Dorsolateral prefrontal cortex (tissue), 120 donors: ENCODE measurements at regions of chr1 and their contacts with region 1.

Region 1: GRCh38 chr1:31189696-31190674 is 49.7 kb downstream of the NKAIN1 start:
- DNase-seq: peak in 8 of 10 donors; percentile 20 to 92 (median 58)
- H3K4me3 ChIP-seq: no peak overlapping the region
- H3K27ac ChIP-seq: peak overlapping the region in 28 of 59 donors; percentile 10 to 84 (median 44)
- H3K27me3 ChIP-seq: no peaks in the 10 kb centered on the region
- CTCF ChIP-seq: no peak

Region 2: GRCh38 chr1:31239653-31240241 is 49.8 kb after region 1 on chr1 and contains the start of gene NKAIN1:
- intact Hi-C with region 1: loop called in 1 of 2 experiments (anchors 5 kb)
- DNase-seq: peak in 3 of 10 donors; percentile 24 to 72 (median 58)
- H3K4me3 ChIP-seq: peak within 1 kb of the TSS; percentile 28 to 76 (median 58)
- H3K27ac ChIP-seq: peak within 1 kb of the TSS in 30 of 59 donors; percentile 3 to 74 (median 48)
- H3K27me3 ChIP-seq: peaks cover 0 to 29% (median 0%) of the 10 kb centered on the region in 45 donors
- CTCF ChIP-seq: peak in 2 of 56 donors; percentile 11 to 26
- total RNA-seq, gene NKAIN1: 3.6 to 42.1 (median 11.7) TPM

Region 3: DNA sequence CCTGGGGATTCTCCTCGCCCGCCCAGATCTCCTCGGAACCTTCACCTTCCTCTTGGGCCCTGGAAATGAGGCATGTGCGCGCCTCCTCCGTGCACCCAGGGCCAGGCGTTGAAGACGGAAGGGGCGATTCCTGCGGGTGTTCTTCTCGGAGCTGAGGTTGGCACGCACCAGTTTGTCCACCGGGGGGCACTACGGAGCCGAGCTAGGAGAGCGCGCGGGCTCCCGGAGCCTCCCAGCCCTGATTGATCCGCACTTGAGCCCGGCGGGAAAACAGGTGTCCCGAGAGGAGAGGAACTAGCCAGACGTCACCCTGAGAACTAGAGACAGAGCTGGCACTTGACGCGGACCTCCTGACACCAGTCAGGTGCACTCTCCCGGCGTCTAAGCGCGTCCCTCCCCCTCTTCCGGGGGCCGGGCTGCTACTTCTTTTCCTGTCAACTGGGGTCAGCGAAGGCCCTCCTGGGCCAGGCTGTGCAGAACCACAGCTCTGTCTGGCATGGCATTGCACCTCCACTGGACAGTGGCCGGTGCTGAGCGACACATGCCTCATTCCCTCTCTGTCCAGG is 204.7 kb after region 1 on chr1:
- intact Hi-C with region 1: no loop called
- DNase-seq: peak; percentile 70 to 87 (median 82)
- H3K4me3 ChIP-seq: peak overlapping the region; percentile 18 to 72 (median 50)
- H3K27ac ChIP-seq: peak overlapping the region in 4 of 59 donors; percentile 3 to 67 (median 34)
- H3K27me3 ChIP-seq: no peaks in the 10 kb centered on the region
- CTCF ChIP-seq: peak; percentile 38 to 95 (median 88)

Region 4: DNA sequence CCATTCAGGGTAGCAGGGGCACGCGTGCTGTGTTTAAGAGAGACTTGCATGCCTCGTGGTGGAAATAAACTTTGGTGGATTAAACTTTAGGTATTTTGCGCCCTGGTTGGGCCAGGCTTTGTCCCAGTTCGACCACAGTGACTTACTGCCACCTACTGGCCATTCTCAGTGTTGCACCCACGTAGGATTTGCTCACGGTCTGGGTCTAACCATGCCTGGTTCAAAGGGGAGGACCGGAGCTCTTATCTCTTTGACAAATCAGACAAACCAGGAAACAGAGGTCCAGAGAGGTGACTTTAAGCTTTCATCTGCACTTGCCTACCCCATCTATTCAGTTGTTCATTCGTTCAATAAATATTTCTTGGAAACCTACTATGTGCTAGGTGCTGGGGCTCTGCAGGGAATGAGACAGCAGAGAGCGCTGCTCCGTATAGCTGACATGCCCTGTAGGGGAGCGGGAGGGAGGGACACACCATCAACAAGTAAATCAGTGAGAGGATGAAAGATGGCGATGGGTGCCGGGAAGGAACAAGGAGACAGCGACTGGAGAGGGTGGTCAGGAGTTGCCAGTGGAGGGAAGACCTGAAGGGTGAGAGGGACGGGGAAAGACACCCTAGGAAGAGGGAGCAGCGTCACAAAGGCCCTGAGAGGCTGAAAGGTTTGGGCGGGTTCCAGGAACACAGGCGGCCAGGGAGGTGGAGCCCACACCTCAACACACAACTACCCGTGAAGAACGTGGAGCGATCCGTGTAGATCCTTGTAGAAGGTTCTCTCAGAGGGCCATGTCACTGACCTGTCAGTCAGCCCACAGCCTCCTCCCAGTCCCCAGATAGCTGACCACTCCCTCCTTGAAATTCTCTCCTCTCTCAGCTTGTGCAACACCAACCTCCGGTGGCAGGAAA is 359.2 kb after region 1 on chr1:
- intact Hi-C with region 1: loop called in 1 of 2 experiments (anchors 5 kb)
- DNase-seq: peak; percentile 69 to 94 (median 80)
- H3K4me3 ChIP-seq: peak overlapping the region in 44 of 59 donors; percentile 0 to 54 (median 34)
- H3K27ac ChIP-seq: peak overlapping the region in 23 of 59 donors; percentile 3 to 76 (median 39)
- H3K27me3 ChIP-seq: peaks cover 0 to 3% (median 0%) of the 10 kb centered on the region in 45 donors
- CTCF ChIP-seq: peak; percentile 80 to 98 (median 94)